Activated CD4-positive, alpha-beta memory T cell treated with anti-CD3 and anti-CD28 coated beads for 36 hours (primary cell): ENCODE measurements at regions of chr6 and their contacts with region 1.

Region 1: DNA sequence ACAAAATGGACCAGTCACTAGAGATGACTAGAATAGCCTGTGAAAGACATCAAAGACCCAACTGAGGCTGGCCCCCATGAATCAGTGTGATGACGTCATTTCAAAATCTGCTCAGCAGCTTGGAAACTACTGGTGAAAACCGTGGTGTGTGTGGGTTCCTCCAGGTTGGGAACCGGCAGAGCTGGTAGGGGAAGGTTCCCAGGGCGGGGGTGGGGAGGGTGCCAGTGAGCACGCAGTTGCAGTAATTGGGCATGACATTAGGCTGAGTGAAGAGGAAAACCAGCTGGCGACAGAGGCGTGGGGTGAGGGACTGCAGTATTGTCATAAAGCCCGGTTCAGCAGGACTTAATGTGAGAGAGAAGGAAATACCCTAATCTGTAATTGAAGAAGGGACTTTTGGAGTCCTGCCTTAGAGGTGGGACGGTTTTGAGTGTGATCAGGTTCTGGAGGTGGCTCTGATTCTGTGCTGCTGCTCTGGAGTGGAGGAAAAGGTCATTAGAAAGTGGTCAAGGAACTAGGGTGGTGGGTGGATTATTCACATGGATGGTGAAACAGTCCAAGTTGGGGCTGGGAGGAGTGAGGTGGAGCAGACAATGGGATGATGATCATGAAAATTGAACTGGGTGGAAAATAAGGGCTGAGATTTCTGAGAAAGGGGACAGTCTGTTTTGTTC is 52.0 kb upstream of the MTHFD1L start:
- DNase-seq: peak; percentile 89
- H3K4me3 Mint-ChIP-seq: peak overlapping the region; percentile 11
- H3K27ac Mint-ChIP-seq: peak overlapping the region; percentile 93
- H3K4me1 Mint-ChIP-seq: peaks cover 27% of the 10 kb centered on the region
- H3K27me3 Mint-ChIP-seq: peaks cover 11% of the 10 kb centered on the region

Region 2: DNA sequence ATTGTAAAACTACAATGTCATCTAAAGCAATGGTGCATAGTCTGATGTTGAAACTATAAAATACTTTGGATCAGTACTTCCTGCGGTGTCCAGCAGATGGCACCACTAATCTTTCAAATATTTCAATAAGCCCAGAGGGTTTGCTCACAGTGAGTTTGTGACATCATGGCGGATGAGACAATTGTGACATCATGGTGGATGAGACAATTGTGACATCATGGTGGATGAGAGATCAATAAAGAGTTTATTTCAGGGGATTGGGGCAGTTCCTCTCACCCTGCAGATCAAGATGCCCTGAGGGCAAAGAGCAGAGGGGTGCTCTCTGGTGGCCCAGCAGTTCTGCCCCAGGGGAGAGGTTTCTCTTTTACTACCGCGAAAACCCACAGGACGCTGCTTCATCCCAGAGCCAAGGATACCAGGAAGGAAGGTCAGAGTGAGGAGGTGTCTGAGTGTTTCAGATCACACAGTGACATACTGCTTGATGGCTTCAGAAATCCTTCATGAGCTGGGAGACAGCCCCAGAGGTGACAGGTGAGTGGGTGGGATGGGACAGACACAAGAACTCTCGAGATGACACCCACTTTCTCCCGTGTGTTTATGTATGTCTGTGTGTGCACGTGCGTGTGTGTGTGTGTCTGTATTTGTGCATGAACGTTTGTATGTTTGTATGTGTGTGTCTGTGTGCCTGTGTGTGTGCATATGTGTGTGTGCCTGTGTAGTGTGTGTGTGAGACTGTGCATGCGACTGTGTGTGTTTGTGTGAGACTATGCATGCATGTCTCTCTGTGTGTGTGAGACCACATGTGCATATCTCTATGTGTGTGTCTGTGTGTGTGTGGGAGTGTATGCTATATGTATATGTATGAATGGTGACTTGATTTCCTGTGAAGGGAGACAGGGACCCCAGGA is 879.0 kb before region 1 on chr6:
- CTCF ChIA-PET with region 1: no interaction called
- POLR2A ChIA-PET with region 1: no interaction called
- intact Hi-C with region 1: loop called (anchors 2 kb)
- DNase-seq: peak; percentile 76
- H3K4me3 Mint-ChIP-seq: no peak overlapping the region
- H3K27ac Mint-ChIP-seq: peak overlapping the region; percentile 49
- H3K4me1 Mint-ChIP-seq: peaks cover 22% of the 10 kb centered on the region
- H3K27me3 Mint-ChIP-seq: peaks cover 82% of the 10 kb centered on the region

Region 3: GRCh38 chr6:150079604-150080003 is 733.9 kb before region 1 on chr6:
- CTCF ChIA-PET with region 1: interaction called, 19 read pairs
- POLR2A ChIA-PET with region 1: no interaction called
- intact Hi-C with region 1: loop called (anchors 1 kb)
- DNase-seq: peak; percentile 45
- H3K4me3 Mint-ChIP-seq: no peak overlapping the region
- H3K27ac Mint-ChIP-seq: no peak overlapping the region
- H3K4me1 Mint-ChIP-seq: peaks cover 17% of the 10 kb centered on the region
- H3K27me3 Mint-ChIP-seq: peaks cover 29% of the 10 kb centered on the region

Region 4: GRCh38 chr6:150334790-150335783 is 478.4 kb before region 1 on chr6:
- CTCF ChIA-PET with region 1: interaction called, 3 read pairs
- POLR2A ChIA-PET with region 1: no interaction called
- intact Hi-C with region 1: loop called (anchors 5 kb)
- DNase-seq: peak; percentile 46
- H3K4me3 Mint-ChIP-seq: no peak overlapping the region
- H3K27ac Mint-ChIP-seq: no peak overlapping the region
- H3K4me1 Mint-ChIP-seq: no peaks in the 10 kb centered on the region
- H3K27me3 Mint-ChIP-seq: peaks cover 20% of the 10 kb centered on the region

Region 5: DNA sequence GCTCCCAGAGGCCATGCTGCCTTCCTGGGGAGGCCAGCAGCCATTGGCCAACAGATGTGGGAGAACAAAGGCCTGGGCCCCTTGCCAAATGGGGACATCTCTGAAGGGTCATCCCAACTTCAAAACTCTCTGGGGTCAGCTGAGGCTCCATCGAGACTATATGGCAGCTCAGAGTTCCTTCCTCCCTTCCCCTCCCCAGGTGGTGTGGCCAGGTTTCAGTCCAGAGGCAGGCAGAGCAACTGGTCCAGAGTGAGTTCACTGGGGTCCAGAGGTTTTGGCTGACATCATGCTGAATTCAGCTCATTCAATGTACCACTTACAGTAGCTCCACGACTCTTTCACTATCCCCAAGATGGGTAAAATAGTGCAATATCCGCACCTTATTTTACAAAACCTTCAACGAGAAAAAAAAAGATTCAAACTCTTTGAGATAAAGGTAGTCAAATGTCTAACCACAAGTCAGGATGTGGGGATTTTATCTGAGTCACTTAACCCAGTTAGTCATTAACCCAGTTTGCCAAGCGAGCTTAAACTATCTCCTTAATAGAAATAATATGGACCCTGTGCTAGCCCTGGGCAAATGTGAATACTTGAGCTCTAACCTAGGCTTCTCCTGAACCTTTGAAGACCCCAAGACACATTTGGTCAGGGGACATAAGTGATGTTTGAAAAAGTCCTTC is 322.2 kb before region 1 on chr6:
- CTCF ChIA-PET with region 1: interaction called, 5 read pairs
- POLR2A ChIA-PET with region 1: no interaction called
- intact Hi-C with region 1: loop called (anchors 2 kb)
- DNase-seq: peak; percentile 35
- H3K4me3 Mint-ChIP-seq: no peak overlapping the region
- H3K27ac Mint-ChIP-seq: peak overlapping the region; percentile 73
- H3K4me1 Mint-ChIP-seq: peaks cover 25% of the 10 kb centered on the region
- H3K27me3 Mint-ChIP-seq: no peaks in the 10 kb centered on the region

Region 6: GRCh38 chr6:150652848-150653613 is 160.4 kb before region 1 on chr6:
- CTCF ChIA-PET with region 1: interaction called, 6 read pairs
- POLR2A ChIA-PET with region 1: no interaction called
- intact Hi-C with region 1: loop called (anchors 1 kb)
- DNase-seq: no peak
- H3K4me3 Mint-ChIP-seq: no peak overlapping the region
- H3K27ac Mint-ChIP-seq: no peak overlapping the region
- H3K4me1 Mint-ChIP-seq: no peaks in the 10 kb centered on the region
- H3K27me3 Mint-ChIP-seq: no peaks in the 10 kb centered on the region

Region 7: GRCh38 chr6:150775415-150776203 is 37.8 kb before region 1 on chr6:
- CTCF ChIA-PET with region 1: no interaction called
- POLR2A ChIA-PET with region 1: no interaction called
- intact Hi-C with region 1: no loop called
- DNase-seq: no peak
- H3K4me3 Mint-ChIP-seq: no peak overlapping the region
- H3K27ac Mint-ChIP-seq: no peak overlapping the region
- H3K4me1 Mint-ChIP-seq: peaks cover 4% of the 10 kb centered on the region
- H3K27me3 Mint-ChIP-seq: no peaks in the 10 kb centered on the region

Region 8: DNA sequence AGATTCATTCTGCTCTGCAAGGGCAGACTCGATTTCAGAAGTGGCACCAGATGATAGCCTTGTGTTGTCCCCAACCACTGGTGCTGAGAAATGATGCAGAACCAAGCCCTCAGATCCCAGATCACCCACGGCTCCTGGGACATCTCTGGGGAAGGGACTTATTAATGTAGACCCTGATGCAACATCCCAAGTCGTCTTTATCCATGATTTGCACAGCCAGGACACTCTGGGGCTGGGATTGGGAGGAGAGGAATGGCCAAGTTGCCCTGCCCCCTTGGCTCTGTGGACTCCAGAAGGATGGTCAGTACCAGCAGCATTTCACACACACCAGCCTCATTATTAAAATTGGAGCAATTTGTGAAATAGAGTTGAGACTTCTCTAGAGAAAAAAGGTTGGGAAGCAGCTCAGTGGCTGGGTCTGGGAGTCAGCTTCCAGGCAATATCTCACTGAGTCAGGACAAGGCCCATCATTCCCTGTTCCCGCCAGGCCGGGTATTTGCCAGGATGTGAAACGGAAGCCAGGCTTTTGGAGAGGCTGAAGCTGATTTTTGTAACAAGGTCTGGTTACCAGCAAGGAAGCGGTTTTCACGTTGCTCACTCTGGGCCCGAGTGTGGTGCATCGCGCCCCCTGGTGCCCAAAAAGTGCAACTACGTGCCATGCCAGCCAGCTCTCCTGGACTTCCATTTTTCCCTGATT is 510.5 kb after region 1 on chr6:
- CTCF ChIA-PET with region 1: interaction called, 12 read pairs
- POLR2A ChIA-PET with region 1: no interaction called
- intact Hi-C with region 1: no loop called
- DNase-seq: peak; percentile 82
- H3K4me3 Mint-ChIP-seq: peak overlapping the region; percentile 24
- H3K27ac Mint-ChIP-seq: no peak overlapping the region
- H3K4me1 Mint-ChIP-seq: peaks cover 26% of the 10 kb centered on the region
- H3K27me3 Mint-ChIP-seq: peaks cover 44% of the 10 kb centered on the region